CD14-positive monocyte (primary cell): ENCODE measurements at regions of chr14 and their contacts with region 1.

Region 1: DNA sequence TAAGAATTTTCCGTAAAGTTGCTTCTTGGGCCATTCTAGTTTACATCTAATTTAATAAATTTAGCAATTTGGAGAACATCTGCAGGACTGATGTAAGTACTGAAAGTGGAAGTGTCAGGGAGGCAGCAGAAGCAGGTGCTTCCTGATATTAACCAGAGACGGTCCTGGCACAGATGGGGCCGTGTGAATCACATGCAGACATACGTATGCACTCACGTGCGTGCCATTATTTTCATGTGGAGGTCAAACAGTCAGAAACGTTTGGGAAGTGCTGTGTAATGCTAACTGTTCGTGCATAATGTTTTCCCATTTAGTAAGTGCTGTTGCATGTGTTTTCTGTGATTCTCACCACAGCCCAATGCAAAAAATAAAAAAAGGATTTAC is 87.8 kb upstream of the DYNC1H1 start:
- DNase-seq: peak; percentile 97 to 99 (median 99)
- H3K4me3 ChIP-seq: peak overlapping the region in 1 of 3 experiments; percentile 47
- H3K4me3 Mint-ChIP-seq: peak overlapping the region; percentile 24 to 35
- H3K27ac ChIP-seq: peak overlapping the region; percentile 82 to 90
- H3K27ac Mint-ChIP-seq: peak overlapping the region; percentile 84 to 97 (median 94)
- H3K4me1 ChIP-seq: peaks cover 28 to 31% of the 10 kb centered on the region in 2 donors
- H3K4me1 Mint-ChIP-seq: peaks cover 50% of the 10 kb centered on the region
- H3K27me3 ChIP-seq: no peaks in the 10 kb centered on the region
- H3K27me3 Mint-ChIP-seq: no peaks in the 10 kb centered on the region
- CTCF ChIP-seq: no peak

Region 2: DNA sequence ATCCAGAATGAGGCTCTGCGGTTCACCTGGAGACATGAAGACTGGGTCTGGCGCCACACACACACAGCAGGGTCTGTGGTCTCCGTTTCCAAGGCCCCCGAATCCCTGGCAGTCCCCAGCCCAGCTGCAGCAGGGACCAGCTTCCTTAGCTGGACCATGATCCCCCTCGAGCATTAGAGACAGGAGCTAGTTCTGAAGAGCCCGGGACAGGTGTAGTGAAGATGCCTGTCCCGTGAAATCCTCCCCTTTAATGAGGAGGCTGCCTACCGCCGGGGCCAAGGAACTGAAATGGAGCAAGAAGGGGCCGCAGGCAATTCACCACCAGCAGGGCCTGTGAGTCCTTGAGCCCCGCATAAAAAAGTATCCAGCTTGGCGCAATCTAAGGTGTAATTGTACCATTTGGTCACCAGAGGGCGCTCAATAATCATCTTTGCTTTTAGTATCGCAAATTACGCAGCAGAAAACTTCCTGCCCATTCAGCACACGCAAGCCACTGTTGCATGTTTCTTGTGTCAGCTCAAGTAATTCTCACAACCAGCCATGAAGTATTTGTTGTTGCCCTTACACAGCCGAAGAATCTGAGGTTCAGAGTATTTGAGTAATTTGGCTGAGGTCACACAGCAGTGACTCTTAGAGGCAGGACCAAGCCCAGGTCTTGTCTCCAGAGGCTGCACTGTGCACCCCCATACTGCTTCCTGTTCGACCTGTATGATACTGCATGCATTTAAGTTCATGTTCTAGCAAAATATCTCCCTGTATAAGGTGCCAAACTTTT is 169.3 kb before region 1 on chr14:
- intact Hi-C with region 1: loop called in 1 of 2 experiments (anchors 10 kb)
- DNase-seq: peak; percentile 78 to 87 (median 82)
- H3K4me3 ChIP-seq: peak overlapping the region in 1 of 3 experiments; percentile 31
- H3K4me3 Mint-ChIP-seq: peak overlapping the region in 1 of 2 donors; percentile 63
- H3K27ac ChIP-seq: no peak overlapping the region
- H3K27ac Mint-ChIP-seq: peak overlapping the region in 3 of 7 donors; percentile 13 to 83 (median 41)
- H3K4me1 ChIP-seq: peaks cover 23 to 34% of the 10 kb centered on the region in 2 donors
- H3K4me1 Mint-ChIP-seq: peaks cover 28% of the 10 kb centered on the region
- H3K27me3 ChIP-seq: peaks cover 15 to 33% of the 10 kb centered on the region in 2 donors
- H3K27me3 Mint-ChIP-seq: peaks cover 37 to 56% (median 40%) of the 10 kb centered on the region in 3 donors
- CTCF ChIP-seq: peak; percentile 84

Region 3: DNA sequence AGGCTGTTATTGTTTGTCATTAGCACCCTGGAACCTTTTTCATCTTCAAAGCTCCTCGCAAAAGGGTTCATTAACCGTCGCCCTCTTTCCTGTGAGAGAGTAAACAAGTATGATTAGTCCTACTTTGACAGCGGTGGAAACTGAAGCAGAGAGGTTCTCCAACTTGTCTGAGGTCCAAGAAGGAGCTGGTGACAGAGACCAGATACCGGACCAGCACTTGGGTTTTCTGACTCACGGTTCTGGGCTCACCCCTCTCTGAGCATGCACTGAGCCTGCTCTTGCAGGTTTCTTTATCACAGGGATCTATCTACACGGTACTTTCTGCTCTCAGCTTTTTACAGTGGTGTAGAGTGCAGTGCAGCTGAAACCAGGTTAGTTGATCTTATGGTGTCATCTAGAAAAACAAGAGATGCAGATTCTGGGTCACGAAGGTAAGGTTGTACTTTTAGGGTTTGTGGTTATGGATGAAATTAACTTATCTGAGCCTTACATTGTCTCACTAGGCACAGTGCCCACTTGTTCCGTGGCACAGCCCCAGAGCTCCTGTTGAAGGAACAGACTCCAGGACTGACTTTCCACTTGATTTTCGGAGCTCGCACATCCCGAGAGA is 52.9 kb before region 1 on chr14:
- intact Hi-C with region 1: loop called in 1 of 2 experiments (anchors 10 kb)
- DNase-seq: peak in 1 of 3 donors; percentile 30
- H3K4me3 ChIP-seq: peak overlapping the region in 1 of 3 experiments; percentile 64
- H3K4me3 Mint-ChIP-seq: peak overlapping the region; percentile 39 to 75
- H3K27ac ChIP-seq: peak overlapping the region; percentile 88 to 100
- H3K27ac Mint-ChIP-seq: peak overlapping the region; percentile 99 to 100 (median 100)
- H3K4me1 ChIP-seq: peaks cover 42 to 47% of the 10 kb centered on the region in 2 donors
- H3K4me1 Mint-ChIP-seq: peaks cover 65% of the 10 kb centered on the region
- H3K27me3 ChIP-seq: no peaks in the 10 kb centered on the region
- H3K27me3 Mint-ChIP-seq: no peaks in the 10 kb centered on the region
- CTCF ChIP-seq: no peak

Region 4: DNA sequence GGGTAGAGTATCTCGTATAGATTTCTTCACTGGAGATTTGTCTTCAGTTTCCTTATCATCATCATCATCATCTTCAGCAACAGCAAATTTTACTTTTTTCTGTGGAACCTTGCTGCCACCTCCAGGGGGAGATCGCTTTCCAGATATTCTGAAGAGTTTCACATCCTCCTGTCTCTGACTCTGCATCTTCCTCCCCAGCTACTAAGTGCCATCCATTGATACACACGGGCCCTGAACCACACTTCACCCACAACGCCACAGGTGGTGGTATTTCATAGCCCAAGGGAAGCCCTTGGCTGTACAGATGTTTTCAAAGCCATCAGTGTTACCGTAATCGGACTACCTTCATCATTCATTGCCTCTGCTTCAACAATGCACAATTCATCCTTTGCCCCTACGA is 32.9 kb before region 1 on chr14:
- intact Hi-C with region 1: loop called (anchors 2 to 5 kb)
- DNase-seq: peak; percentile 74 to 85 (median 84)
- H3K4me3 ChIP-seq: no peak overlapping the region
- H3K4me3 Mint-ChIP-seq: no peak overlapping the region
- H3K27ac ChIP-seq: peak overlapping the region in 1 of 2 donors; percentile 66
- H3K27ac Mint-ChIP-seq: peak overlapping the region; percentile 60 to 89 (median 84)
- H3K4me1 ChIP-seq: peaks cover 8 to 13% of the 10 kb centered on the region in 2 donors
- H3K4me1 Mint-ChIP-seq: peaks cover 31% of the 10 kb centered on the region
- H3K27me3 ChIP-seq: no peaks in the 10 kb centered on the region
- H3K27me3 Mint-ChIP-seq: peaks cover 0 to under 1% (median 0%) of the 10 kb centered on the region in 3 donors
- CTCF ChIP-seq: peak; percentile 88

Region 5: GRCh38 chr14:101947906-101948665 is 71.5 kb after region 1 on chr14:
- intact Hi-C with region 1: loop called in 1 of 2 experiments (anchors 5 kb)
- DNase-seq: peak; percentile 99 to 100 (median 100)
- H3K4me3 ChIP-seq: peak overlapping the region; percentile 51 to 79 (median 67)
- H3K4me3 Mint-ChIP-seq: peak overlapping the region; percentile 88 to 98
- H3K27ac ChIP-seq: peak overlapping the region; percentile 93 to 96
- H3K27ac Mint-ChIP-seq: peak overlapping the region; percentile 98 to 100 (median 100)
- H3K4me1 ChIP-seq: peaks cover 17 to 27% of the 10 kb centered on the region in 2 donors
- H3K4me1 Mint-ChIP-seq: peaks cover 24% of the 10 kb centered on the region
- H3K27me3 ChIP-seq: peaks cover 6 to 19% of the 10 kb centered on the region in 2 donors
- H3K27me3 Mint-ChIP-seq: peaks cover 31 to 36% (median 35%) of the 10 kb centered on the region in 3 donors
- CTCF ChIP-seq: no peak